HCT116 (cell line): ENCODE measurements at regions of chr1 and their contacts with region 1.

Region 1: DNA sequence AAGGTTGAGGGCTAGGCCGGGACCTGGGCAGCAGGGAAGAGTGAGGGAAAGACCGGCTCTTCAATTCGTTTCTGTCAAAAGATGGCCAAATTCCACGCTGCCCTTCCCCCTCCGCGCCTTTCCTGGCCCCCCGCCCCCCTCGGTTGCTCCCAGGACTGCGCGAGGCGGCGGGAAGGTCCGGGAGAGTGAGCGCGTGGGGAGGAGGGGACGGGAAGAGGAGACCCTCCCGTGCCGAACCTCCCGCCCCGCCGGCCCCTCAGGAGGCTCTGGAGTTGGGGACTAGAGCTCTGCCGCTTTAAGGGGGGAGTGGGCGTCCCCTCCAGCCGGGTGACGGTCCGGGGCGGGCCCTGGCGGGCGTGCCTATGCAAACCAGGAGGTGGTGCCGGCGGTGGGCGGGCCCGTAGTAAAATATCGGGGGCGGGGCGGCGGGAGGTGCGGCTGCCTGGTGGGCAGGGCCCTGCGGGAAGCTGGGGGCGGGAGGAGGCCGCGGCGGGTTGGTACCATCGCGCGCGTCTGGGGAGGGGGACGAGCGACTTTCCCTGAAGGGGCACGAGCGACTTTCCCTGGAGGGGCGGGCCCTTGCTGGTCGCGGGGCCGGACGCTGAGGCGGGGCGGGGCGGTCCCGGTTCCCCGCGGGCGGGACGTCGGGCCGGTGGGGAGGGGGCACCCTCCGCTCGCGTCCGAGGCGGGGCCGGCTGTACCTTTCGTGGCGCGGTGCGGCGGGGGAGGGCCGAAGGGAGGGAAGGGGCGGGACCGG is 58.2 kb downstream of the BCL9 start:
- DNase-seq: peak; percentile 77
- ATAC-seq: peak; percentile 88
- H3K4me3 ChIP-seq: peak overlapping the region; percentile 48 to 77
- H3K27ac ChIP-seq: peak overlapping the region; percentile 38; the same call in 1 of the 2 replicates
- H3K4me1 ChIP-seq: peaks cover 3 to 18% of the 10 kb centered on the region in 2 experiments; a peak in 3 of 4 replicates
- H3K27me3 ChIP-seq: no peaks in the 10 kb centered on the region
- CTCF ChIP-seq: no peak
- POLR2A ChIP-seq: no peak
- RAD21 ChIP-seq: no peak

Region 2: GRCh38 chr1:147541672-147542568 is 57.6 kb before region 1 on chr1:
- CTCF ChIA-PET with region 1: no interaction called
- POLR2A ChIA-PET with region 1: no interaction called
- RAD21 ChIA-PET with region 1: no interaction called
- intact Hi-C with region 1: loop called (anchors 1 kb)
- DNase-seq: no peak
- ATAC-seq: peak; percentile 1; the same call in 1 of the 2 replicates
- H3K4me3 ChIP-seq: peak overlapping the region; percentile 12 to 37
- H3K27ac ChIP-seq: peak overlapping the region; percentile 30; the same call in 1 of the 2 replicates
- H3K4me1 ChIP-seq: peaks cover 38 to 58% of the 10 kb centered on the region in 2 experiments
- H3K27me3 ChIP-seq: no peaks in the 10 kb centered on the region
- CTCF ChIP-seq: no peak
- POLR2A ChIP-seq: no peak
- RAD21 ChIP-seq: no peak